ENCODE measurements at regions of chr2 and their contacts with region 1.

Region 1: GRCh38 chr2:46650556-46651001 is 171.2 kb downstream of the TMEM247 start:
- DNase-seq: peak; percentile 55 to 91 (median 82)
- H3K4me3 ChIP-seq: no peak overlapping the region
- H3K27ac ChIP-seq: no peak overlapping the region
- H3K4me1 ChIP-seq: peaks cover 5 to 9% of the 10 kb centered on the region in 2 donors
- H3K27me3 ChIP-seq: no peaks in the 10 kb centered on the region
- CTCF ChIP-seq: peak; percentile 91 to 99 (median 97)
- POLR2A ChIP-seq: no peak

Region 2: DNA sequence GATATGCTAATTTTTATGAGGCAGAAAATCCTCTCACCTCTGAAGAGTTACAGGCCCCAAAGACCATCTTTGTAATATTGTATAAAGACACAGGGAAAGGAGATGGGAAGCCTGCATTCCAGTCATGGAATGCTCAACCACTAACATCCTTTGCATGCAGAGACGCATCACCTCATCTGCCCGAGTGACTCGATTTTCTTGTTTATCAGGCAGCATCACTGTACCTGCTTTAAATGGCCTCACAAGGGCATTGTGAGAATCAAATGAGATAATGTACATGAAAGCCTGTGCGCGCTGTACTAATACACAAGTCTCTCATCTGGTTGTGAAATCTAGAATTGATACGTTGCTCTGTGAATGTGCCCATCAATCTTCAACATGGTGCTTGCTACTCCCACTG is 181.5 kb before region 1 on chr2:
- intact Hi-C with region 1: loop called in 1 of 2 experiments (anchors 5 kb)
- DNase-seq: no peak
- H3K4me3 ChIP-seq: no peak overlapping the region
- H3K27ac ChIP-seq: no peak overlapping the region
- H3K4me1 ChIP-seq: peaks cover 0 to 3% of the 10 kb centered on the region in 2 donors
- H3K27me3 ChIP-seq: no peaks in the 10 kb centered on the region
- CTCF ChIP-seq: no peak
- POLR2A ChIP-seq: no peak

Region 3: DNA sequence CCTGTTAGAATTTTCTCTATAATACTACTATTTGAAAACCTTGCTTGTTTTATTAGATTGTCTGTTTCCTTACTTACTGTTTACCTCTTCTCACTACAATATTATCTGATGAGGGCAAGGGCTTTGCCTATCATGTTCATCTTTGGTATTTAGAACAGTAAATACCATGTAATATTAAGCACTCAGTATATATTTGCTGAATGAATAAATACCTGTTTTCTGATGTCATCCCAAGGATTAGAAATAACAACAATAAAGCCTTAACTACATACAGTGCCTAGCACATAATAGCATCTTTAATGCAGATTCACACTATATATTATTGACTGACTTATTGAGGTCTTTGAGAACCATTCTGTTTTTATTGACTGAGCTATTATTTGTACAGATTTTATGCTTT is 29.1 kb before region 1 on chr2:
- intact Hi-C with region 1: no loop called
- DNase-seq: no peak
- H3K4me3 ChIP-seq: no peak overlapping the region
- H3K27ac ChIP-seq: no peak overlapping the region
- H3K4me1 ChIP-seq: peaks cover 11 to 20% of the 10 kb centered on the region in 2 donors
- H3K27me3 ChIP-seq: no peaks in the 10 kb centered on the region
- CTCF ChIP-seq: no peak
- POLR2A ChIP-seq: no peak

Region 4: DNA sequence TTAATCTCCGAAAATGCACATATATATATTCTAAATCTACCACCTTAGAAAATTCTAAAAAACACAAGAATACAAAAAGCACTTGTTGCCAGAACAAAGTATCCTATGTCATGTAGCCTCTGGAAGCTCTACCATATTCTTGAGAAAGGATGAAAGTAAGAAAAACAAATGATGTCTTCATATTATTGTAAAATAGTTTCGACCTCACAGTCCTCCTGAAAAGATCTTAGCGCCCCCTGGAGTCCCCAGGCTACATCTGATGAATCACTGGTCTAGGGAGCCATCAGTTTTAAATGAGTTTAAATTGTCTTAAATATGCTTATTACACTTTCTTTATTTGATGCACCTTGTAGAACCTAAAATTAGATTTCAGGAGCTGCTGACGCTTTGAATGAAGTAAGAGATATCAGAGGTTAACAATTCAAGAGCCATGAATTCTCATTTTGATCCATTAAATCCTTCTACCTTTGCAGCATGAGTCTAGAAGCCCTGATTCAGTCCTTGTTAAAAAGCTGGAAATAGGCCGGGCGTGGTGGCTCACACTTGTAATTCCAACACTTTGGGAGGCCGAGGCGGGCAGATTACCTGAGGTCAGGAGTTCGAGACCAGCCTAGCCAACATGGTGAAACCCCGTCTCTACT is 126.2 kb after region 1 on chr2:
- intact Hi-C with region 1: loop called in 1 of 2 experiments (anchors 10 kb)
- DNase-seq: peak; percentile 53 to 86 (median 77)
- H3K4me3 ChIP-seq: no peak overlapping the region
- H3K27ac ChIP-seq: no peak overlapping the region
- H3K4me1 ChIP-seq: peaks cover 0 to 20% of the 10 kb centered on the region in 2 donors
- H3K27me3 ChIP-seq: no peaks in the 10 kb centered on the region
- CTCF ChIP-seq: peak; percentile 55 to 76 (median 61)
- POLR2A ChIP-seq: no peak

Region 5: GRCh38 chr2:46887028-46887885 is 236.7 kb after region 1 on chr2:
- intact Hi-C with region 1: loop called in 1 of 2 experiments (anchors 5 kb)
- DNase-seq: no peak
- H3K4me3 ChIP-seq: no peak overlapping the region
- H3K27ac ChIP-seq: no peak overlapping the region
- H3K4me1 ChIP-seq: no peaks in the 10 kb centered on the region
- H3K27me3 ChIP-seq: no peaks in the 10 kb centered on the region
- CTCF ChIP-seq: no peak
- POLR2A ChIP-seq: no peak